ENCODE measurements at regions of chr11 and their contacts with region 1.

Region 1: GRCh38 chr11:125902927-125903710 is at the start of gene PUS3:
- H3K4me3 Mint-ChIP-seq: peak within 1 kb of the TSS; percentile 89
- H3K27ac Mint-ChIP-seq: peak within 1 kb of the TSS; percentile 90
- H3K4me1 Mint-ChIP-seq: peaks cover 20% of the 10 kb centered on the region
- H3K27me3 Mint-ChIP-seq: peaks cover 37% of the 10 kb centered on the region

Region 2: GRCh38 chr11:125887373-125888324 is 15.5 kb before region 1 on chr11 and contains the start of gene HYLS1:
- intact Hi-C with region 1: loop called (anchors 1 kb)
- H3K4me3 Mint-ChIP-seq: peak within 1 kb of the TSS; percentile 85
- H3K27ac Mint-ChIP-seq: peak within 1 kb of the TSS; percentile 91
- H3K4me1 Mint-ChIP-seq: peaks cover 21% of the 10 kb centered on the region
- H3K27me3 Mint-ChIP-seq: peaks cover 3% of the 10 kb centered on the region

Region 3: DNA sequence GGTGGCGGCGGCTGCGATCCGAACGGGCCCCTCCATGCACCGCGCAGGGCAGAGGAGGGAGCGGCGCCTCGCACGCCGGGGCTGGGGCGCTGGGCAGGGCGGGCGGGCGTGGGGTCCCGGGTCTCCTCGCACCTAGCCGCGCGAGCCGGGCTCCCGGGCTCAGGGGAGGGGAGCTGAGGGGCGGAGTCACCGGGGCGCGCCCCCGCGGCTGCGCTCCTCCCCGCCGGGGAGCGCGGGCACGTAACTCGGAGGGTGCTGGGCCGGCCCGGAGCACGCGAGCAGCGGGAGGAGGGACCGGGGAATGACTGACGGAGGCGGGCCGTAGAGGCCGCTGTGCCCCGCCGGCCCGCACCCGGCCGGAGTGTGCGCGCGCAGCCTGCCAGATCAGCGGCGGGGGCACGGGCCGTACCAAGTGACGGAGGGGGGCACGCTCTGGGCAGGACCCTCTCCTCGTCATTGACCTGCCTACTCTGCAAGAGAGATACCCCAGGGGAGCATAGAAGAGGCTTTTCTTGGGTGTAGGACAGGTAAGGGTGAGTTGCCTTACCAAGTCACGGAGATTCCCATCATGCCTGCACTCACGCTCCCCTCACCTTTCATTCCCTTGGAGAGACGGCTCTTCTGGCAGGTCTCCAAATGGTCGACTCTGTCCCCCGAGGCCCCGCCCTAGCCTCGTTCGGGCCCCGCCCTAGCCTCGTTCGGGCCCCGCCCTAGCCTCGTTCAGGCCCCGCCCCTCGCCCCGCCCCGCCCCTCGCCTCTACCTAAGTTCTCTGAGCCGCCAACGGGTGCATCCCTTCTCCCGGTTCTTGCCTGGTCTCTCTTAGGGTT is 159.8 kb after region 1 on chr11 and contains the start of gene CDON:
- intact Hi-C with region 1: loop called (anchors 5 kb)
- H3K4me3 Mint-ChIP-seq: peak within 1 kb of the TSS; percentile 76
- H3K27ac Mint-ChIP-seq: peak within 1 kb of the TSS; percentile 83
- H3K4me1 Mint-ChIP-seq: peaks cover 5% of the 10 kb centered on the region
- H3K27me3 Mint-ChIP-seq: peaks cover 50% of the 10 kb centered on the region